ENCODE measurements at regions of chr3 and their contacts with region 1.

Region 1: DNA sequence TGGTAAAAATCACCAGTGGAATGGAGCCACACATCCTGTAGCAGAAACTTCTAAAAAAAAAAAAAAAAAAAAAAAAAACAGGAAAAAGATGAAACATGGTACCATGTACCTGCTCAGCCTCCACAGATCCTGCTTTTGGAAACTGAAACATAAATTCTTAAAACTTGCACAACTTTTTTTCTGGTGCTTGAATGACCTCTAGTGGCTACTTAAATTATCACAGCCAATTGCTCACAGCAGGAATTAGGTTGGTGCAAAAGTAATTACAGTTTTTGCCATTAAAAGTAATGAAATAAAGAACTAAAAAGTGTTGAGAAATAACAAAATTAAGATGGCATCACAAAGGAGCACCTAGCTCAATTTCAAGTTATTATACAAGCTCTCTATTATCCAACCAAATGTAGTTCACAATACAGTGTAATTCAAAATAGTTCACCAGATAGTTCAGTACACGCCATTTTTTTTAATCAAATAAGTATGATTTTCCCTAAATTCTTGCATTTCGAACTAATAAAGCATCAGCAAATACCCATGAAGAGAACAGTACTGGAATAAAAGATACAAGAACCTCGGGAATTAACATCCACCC is 80.6 kb downstream of the ULK4 start:
- DNase-seq: peak in 1 of 2 donors; percentile 66
- ATAC-seq: no peak
- H3K4me3 ChIP-seq: no peak overlapping the region
- H3K4me3 Mint-ChIP-seq: no peak overlapping the region
- H3K27ac ChIP-seq: no peak overlapping the region
- H3K27ac Mint-ChIP-seq: no peak overlapping the region
- H3K4me1 ChIP-seq: no peaks in the 10 kb centered on the region
- H3K4me1 Mint-ChIP-seq: no peaks in the 10 kb centered on the region
- H3K27me3 ChIP-seq: no peaks in the 10 kb centered on the region
- H3K27me3 Mint-ChIP-seq: no peaks in the 10 kb centered on the region
- CTCF ChIP-seq: peak; percentile 79

Region 2: GRCh38 chr3:40191850-40192448 is 1689.4 kb before region 1 on chr3:
- intact Hi-C with region 1: loop called (anchors 10 kb)
- DNase-seq: peak; percentile 48 to 76
- ATAC-seq: peak; percentile 84 to 90 (median 90)
- H3K4me3 ChIP-seq: no peak overlapping the region
- H3K4me3 Mint-ChIP-seq: no peak overlapping the region
- H3K27ac ChIP-seq: no peak overlapping the region
- H3K27ac Mint-ChIP-seq: no peak overlapping the region
- H3K4me1 ChIP-seq: no peaks in the 10 kb centered on the region
- H3K4me1 Mint-ChIP-seq: no peaks in the 10 kb centered on the region
- H3K27me3 ChIP-seq: no peaks in the 10 kb centered on the region
- H3K27me3 Mint-ChIP-seq: no peaks in the 10 kb centered on the region
- CTCF ChIP-seq: peak; percentile 96

Region 3: DNA sequence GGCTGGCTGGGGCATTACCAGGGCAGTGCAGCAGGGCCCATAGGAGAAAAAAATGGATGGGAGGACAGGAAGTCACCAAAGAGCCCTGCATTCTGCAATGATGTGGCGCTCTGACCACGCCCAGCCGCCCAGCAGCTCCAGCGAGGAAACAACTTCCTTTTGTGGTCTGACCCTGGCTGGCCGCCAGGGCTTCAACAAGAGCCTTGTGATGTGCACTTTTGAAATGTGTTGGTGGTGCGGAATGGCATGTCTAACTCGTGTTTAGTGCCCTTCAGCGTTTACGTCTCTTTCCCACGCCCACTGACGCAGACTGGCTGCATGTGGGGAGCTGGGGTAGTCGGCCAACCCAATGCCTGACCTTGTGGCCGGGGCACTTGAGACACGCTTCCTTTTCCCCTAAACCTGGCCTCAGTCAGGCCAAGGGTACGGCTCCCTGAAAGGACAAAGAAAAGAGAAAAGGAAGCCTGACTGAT is 763.9 kb before region 1 on chr3:
- intact Hi-C with region 1: no loop called
- DNase-seq: peak; percentile 78 to 93
- ATAC-seq: peak; percentile 71 to 88 (median 88)
- H3K4me3 ChIP-seq: no peak overlapping the region
- H3K4me3 Mint-ChIP-seq: peak overlapping the region; percentile 70
- H3K27ac ChIP-seq: peak overlapping the region; percentile 91
- H3K27ac Mint-ChIP-seq: peak overlapping the region; percentile 90 to 94
- H3K4me1 ChIP-seq: peaks cover 22% of the 10 kb centered on the region
- H3K4me1 Mint-ChIP-seq: peaks cover 28 to 29% of the 10 kb centered on the region in 2 donors
- H3K27me3 ChIP-seq: no peaks in the 10 kb centered on the region
- H3K27me3 Mint-ChIP-seq: no peaks in the 10 kb centered on the region
- CTCF ChIP-seq: no peak

Region 4: DNA sequence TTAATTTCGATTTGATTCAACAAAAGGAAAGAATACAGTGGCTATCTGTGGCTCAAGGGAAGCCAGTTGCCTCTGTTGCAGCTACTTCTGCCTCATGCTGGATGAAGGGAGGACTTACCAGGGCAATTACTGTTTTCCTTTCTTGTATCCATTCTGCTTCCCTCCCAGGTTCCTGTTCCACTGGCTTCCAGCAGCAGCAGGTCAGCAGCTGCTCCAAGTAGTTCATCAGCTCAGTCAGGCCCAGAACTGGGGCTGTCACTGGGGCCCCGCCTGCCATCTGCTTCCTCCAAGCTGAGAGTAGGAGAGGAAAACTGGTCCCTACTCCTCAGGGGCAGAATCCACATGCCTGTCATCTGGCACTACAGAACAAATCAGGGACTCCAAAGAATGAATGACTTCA is 129.2 kb after region 1 on chr3:
- intact Hi-C with region 1: no loop called
- DNase-seq: no peak
- ATAC-seq: no peak
- H3K4me3 ChIP-seq: no peak overlapping the region
- H3K4me3 Mint-ChIP-seq: no peak overlapping the region
- H3K27ac ChIP-seq: no peak overlapping the region
- H3K27ac Mint-ChIP-seq: peak overlapping the region in 1 of 2 donors; percentile 56
- H3K4me1 ChIP-seq: peaks cover 20% of the 10 kb centered on the region
- H3K4me1 Mint-ChIP-seq: peaks cover 24 to 28% of the 10 kb centered on the region in 2 donors
- H3K27me3 ChIP-seq: no peaks in the 10 kb centered on the region
- H3K27me3 Mint-ChIP-seq: no peaks in the 10 kb centered on the region
- CTCF ChIP-seq: no peak